ENCODE measurements at regions of chr5 and their contacts with region 1.

Region 1: GRCh38 chr5:78527054-78527859 is 121.3 kb downstream of the LHFPL2 start:
- DNase-seq: no peak

Region 2: DNA sequence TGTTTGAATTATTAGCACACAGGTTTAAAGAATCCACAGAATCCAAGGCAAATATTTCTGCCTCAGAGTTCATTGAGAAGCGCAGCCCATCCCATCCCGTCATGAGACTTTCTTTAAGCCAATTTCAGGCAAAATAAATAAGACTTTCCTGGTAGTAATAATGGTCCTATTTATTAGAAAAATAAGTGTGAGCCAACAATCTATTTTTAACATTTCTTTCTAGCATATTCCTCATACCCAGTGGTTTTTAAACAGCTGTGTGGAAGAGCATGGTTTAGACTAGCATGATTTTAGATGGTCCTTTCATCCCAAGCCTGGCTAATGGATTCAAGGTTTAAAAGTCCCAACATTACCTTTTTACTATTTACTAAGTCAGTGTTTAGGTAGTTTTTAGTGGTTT is 41.0 kb before region 1 on chr5:
- intact Hi-C with region 1: loop called (anchors 5 kb)
- DNase-seq: no peak

Region 3: GRCh38 chr5:78547731-78548615 is 20.7 kb after region 1 on chr5:
- intact Hi-C with region 1: no loop called
- DNase-seq: peak; percentile 91

Region 4: GRCh38 chr5:78627175-78627574 is 99.9 kb after region 1 on chr5:
- intact Hi-C with region 1: no loop called
- DNase-seq: no peak